Posterior vena cava (tissue), 2 donors: ENCODE measurements at regions of chr7 and their contacts with region 1.

Region 1: DNA sequence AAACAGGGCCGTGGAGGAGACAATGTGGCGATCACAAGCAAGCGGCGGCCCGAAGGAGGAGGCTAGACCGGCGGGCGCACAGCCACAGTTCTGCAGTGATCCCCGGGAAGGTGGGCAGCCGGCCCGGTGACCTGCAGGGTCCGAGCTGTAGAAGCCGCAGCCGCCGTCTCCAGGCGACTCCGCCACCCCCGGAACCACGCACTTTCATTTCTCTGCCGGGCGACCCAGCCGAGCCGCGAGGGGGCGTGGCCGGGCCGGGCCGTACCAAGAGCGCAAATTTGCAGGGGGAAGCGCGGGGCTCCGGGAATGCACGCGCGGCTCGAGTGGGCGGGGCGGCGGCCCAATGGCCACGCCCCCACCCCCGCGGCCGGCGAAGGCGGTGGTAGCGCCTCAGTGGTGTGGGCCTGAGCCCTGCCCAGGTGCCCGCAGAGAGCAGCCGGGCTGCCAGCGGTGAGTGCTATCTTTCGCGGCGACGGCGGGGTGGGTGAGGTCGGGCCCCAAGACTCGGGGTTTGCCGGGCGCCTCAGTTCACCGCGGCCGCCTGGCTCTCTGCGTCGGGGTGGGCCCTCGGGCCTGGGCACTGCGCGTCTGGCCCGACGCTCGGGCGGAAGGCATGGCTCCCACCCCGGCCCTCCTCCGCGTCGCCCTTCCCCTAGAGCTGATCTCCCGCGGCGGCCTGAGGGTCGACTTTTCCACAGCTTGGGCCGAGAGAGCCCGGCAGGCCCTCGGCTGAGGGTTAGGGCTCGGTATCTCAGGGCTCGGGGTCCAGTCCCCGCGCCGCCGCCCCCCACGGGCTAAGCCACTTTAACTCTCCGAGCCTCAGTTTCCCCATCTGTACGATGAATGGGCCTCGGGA is at the start of gene POR:
- DNase-seq: peak; percentile 98
- total RNA-seq, gene POR: 76.3 to 88.8 TPM

Region 2: GRCh38 chr7:74569501-74570075 is 1345.4 kb before region 1 on chr7:
- intact Hi-C with region 1: loop called in 1 of 2 experiments (anchors 5 kb)
- DNase-seq: no peak

Region 3: GRCh38 chr7:75879771-75880184 is 35.2 kb before region 1 on chr7:
- intact Hi-C with region 1: loop called in 1 of 2 experiments (anchors 1 kb)
- DNase-seq: no peak

Region 4: DNA sequence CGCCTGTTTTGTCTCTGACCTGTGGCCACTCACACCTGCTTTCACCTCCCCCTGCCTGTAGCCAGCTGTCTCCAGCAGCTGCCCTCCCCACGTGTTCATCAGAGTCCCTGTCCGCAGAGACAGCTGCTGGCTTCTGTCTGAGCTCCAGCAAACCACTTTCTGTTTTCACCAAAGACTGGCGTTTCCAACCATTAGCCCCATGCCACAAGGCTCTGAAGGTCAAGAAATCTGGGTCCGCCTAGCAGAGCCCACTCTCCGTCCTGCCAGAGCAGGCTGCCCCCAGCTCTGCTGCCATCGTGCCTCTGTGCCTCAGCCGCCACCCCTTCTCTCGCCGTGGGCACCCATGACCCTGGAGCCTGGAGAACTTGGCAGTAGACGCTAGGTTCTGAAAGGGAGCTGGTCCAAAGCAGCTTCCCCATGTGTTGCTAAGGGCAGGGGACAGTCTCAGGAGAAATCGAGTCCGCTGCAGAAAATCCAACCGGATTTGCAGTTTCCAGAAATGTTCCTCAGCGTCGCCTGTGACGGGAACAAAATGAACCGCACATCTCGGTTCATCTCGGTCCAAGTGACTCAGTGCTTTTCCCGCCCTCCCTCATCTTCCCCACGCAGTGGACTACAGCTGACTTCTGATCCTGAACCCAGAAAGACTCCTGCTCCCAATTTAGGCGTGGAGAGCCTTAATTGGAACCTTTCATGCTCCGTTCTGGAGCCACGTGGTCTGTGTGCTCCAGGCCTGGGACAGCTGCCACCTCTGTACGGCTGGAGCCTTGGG is 51.4 kb after region 1 on chr7:
- intact Hi-C with region 1: loop called in 1 of 2 experiments (anchors 10 kb)
- DNase-seq: peak; percentile 91

Region 5: GRCh38 chr7:76074954-76075335 is 160.0 kb after region 1 on chr7:
- intact Hi-C with region 1: no loop called
- DNase-seq: no peak